ENCODE measurements at regions of chr1 and their contacts with region 1.

Region 1: GRCh38 chr1:37676281-37677243 is 15.8 kb upstream of the CDCA8 start:
- DNase-seq: peak; percentile 81
- H3K4me3 ChIP-seq: peak overlapping the region; percentile 50
- H3K27ac ChIP-seq: peak overlapping the region; percentile 85
- H3K4me1 ChIP-seq: peaks cover 63% of the 10 kb centered on the region
- CTCF ChIP-seq: peak; percentile 56; the same call in 1 of the 2 replicates

Region 2: DNA sequence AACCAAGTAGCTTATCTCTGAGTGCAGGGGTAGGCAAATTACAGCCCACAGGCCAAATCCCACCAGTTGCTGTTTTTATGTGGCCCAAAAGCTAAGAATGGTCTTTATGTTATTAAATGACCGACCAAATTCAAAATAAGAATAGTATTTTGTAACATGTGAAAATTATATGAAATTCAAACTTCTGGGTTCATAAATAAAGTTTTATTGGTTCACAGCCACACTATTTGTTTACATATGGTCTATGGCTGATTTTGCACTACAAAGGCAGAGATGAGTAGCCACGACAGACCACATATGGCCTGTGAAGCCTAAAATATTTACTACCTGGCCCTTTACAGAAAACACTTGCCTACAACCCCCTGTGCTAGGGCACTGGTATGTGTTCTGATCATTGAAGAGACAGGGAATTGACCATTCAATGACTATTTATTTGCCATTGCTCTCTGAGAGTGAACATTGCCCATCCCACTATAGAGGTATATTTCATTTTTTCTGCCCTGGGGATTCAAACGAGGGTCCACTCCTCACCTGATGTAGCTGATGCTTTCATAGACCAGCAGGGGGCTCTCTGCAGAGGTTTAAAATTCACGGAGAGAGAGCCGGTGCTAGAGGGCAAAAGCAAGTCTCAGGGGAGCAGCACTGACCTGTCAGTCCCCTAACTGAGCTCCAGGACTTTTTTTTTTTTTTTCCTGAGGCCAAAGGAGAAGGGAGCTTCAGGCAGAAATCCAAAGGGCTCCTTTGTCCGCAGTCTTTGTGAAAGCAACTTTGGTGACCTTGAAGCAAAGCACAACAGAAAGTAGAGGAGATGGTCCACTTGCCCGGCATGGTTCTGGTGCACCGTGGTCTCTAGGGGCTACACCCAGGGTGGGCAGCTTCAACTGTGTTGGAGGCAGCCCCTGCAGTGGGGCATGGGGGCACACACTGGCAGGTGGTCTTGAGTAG is 73.5 kb before region 1 on chr1:
- CTCF ChIA-PET with region 1: interaction called, 9 read pairs
- POLR2A ChIA-PET with region 1: interaction called, 10 read pairs
- intact Hi-C with region 1: no loop called
- DNase-seq: peak; percentile 76
- H3K4me3 ChIP-seq: no peak overlapping the region
- H3K27ac ChIP-seq: no peak overlapping the region
- H3K4me1 ChIP-seq: peaks cover 4% of the 10 kb centered on the region
- CTCF ChIP-seq: peak; percentile 95

Region 3: GRCh38 chr1:37661401-37661800 is 15.2 kb before region 1 on chr1:
- CTCF ChIA-PET with region 1: interaction called, 4 read pairs
- POLR2A ChIA-PET with region 1: interaction called, 20 read pairs
- intact Hi-C with region 1: no loop called
- DNase-seq: no peak
- H3K4me3 ChIP-seq: no peak overlapping the region
- H3K27ac ChIP-seq: no peak overlapping the region
- H3K4me1 ChIP-seq: peaks cover 15% of the 10 kb centered on the region
- CTCF ChIP-seq: no peak

Region 4: GRCh38 chr1:37699147-37699546 is 22.6 kb after region 1 on chr1:
- CTCF ChIA-PET with region 1: no interaction called
- POLR2A ChIA-PET with region 1: no interaction called
- intact Hi-C with region 1: no loop called
- DNase-seq: no peak
- H3K4me3 ChIP-seq: no peak overlapping the region
- H3K27ac ChIP-seq: no peak overlapping the region
- H3K4me1 ChIP-seq: peaks cover 5% of the 10 kb centered on the region
- CTCF ChIP-seq: no peak

Measured in OCI-LY7 (cell line).